ENCODE measurements at regions of chr12 and their contacts with region 1.

Region 1: GRCh38 chr12:93742110-93742934 is 65.1 kb downstream of the CRADD start:
- DNase-seq: no peak
- H3K4me3 ChIP-seq: peak overlapping the region; percentile 58 to 63
- H3K27ac ChIP-seq: peak overlapping the region; percentile 97
- H3K4me1 ChIP-seq: peaks cover 51% of the 10 kb centered on the region
- H3K27me3 ChIP-seq: no peaks in the 10 kb centered on the region
- CTCF ChIP-seq: no peak
- POLR2A ChIP-seq: no peak

Region 2: DNA sequence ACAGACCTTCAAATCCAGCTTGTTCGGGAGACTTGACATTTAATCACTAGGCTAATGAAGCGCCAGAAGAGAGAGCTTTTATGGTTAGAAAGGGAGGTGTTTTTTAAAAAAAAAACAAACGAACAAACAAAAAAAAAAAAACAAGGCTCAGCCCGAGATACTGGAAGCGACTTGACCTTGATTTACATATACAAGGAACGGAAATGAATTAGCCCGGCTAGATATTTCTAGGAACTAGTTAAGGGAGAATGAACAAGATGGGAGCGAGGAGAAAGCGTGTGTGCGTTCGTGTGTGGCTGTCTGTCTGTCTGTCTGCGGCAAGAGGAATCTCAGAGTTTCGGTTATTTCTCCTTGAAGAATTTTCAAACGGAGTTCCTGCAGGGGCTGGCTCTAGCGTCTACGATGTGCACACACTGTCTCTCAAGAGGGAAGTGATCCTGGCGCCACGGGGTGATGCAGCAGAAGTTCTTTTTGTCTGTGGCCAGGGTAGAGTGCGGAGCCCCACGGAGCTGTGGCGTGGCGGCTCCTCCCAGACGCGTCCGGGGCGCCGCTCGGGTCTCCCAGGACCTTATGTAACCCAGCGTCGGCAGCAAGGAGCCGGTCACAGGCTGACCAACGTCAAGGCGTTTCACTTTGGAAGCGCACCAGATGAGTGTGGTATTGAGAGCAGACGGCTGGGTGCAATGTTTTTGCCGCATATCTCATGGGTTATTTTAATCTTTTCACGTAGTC is 151.0 kb before region 1 on chr12:
- intact Hi-C with region 1: loop called (anchors 5 kb)
- DNase-seq: peak in 1 of 2 donors; percentile 94
- H3K4me3 ChIP-seq: peak overlapping the region; percentile 51 to 62
- H3K27ac ChIP-seq: peak overlapping the region; percentile 89
- H3K4me1 ChIP-seq: peaks cover 34% of the 10 kb centered on the region
- H3K27me3 ChIP-seq: no peaks in the 10 kb centered on the region
- CTCF ChIP-seq: no peak
- POLR2A ChIP-seq: peak in 1 of 2 donors; percentile 63

Region 3: DNA sequence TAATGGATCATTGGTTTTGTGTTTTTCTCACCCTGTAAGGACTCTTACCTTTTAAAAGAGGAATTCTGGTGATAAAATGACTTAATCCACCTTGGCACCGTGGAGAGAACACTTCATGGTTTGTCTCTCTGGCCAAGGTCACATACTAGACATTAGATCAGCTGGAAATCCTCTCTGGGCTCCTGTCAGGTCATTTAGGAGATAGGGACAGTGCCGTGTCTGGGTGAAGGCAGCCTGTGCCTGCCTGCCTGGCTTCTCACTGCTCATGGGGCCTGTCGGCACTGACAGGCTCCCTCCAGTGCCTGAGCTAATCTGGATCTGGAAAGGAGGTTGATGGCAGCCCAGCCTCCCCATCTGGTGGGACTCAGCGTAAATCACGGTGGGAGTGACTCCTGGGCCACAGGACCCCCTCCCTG is 59.5 kb before region 1 on chr12:
- intact Hi-C with region 1: loop called (anchors 10 kb)
- DNase-seq: no peak
- H3K4me3 ChIP-seq: no peak overlapping the region
- H3K27ac ChIP-seq: peak overlapping the region; percentile 79
- H3K4me1 ChIP-seq: peaks cover 72% of the 10 kb centered on the region
- H3K27me3 ChIP-seq: no peaks in the 10 kb centered on the region
- CTCF ChIP-seq: no peak
- POLR2A ChIP-seq: no peak

Region 4: DNA sequence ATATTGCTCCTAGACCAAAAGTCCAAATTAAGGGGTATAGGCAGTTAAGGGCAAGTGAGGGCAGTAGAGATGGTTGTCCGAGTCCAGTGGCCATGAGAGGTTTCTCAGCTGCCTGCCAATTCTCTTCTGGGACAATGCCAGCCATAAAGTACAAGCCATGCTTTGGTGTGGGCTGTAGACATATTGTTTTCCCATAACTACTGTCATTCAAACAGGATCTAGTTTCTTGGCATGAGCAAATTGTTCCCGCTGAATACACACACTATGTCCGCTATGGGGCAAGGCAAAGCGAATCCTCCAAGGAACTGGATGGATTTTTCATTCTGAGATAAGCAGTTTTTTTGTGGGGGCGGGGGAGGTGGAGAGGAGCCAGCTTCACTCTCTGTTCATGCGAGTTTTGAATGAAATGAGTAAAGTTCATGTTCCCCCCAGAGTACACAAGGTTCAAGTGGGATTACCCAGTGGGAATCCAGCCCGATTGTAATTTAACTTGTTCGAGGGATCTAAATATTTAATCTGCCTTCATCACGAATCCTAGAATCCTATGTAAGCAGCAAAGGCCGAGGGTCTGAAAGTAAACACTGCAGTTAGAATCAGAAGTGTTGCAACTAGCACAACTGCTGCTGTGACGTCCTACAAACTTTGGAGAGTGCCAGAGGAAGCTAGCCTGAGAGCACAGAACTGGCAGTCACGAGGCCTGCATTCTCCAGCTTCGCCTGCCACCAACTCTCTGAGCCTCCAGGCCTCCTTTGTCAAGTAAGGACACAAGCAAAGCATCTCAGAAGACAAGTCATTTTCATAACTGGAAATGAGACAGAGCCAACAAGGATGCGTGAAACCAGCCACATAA is 71.9 kb after region 1 on chr12:
- intact Hi-C with region 1: loop called (anchors 10 kb)
- DNase-seq: peak in 1 of 2 donors; percentile 95
- H3K4me3 ChIP-seq: peak overlapping the region in 1 of 2 donors; percentile 20
- H3K27ac ChIP-seq: peak overlapping the region; percentile 84
- H3K4me1 ChIP-seq: peaks cover 68% of the 10 kb centered on the region
- H3K27me3 ChIP-seq: no peaks in the 10 kb centered on the region
- CTCF ChIP-seq: no peak
- POLR2A ChIP-seq: no peak